KBM-7 (cell line): ENCODE measurements at regions of chr18 and their contacts with region 1.

Region 1: DNA sequence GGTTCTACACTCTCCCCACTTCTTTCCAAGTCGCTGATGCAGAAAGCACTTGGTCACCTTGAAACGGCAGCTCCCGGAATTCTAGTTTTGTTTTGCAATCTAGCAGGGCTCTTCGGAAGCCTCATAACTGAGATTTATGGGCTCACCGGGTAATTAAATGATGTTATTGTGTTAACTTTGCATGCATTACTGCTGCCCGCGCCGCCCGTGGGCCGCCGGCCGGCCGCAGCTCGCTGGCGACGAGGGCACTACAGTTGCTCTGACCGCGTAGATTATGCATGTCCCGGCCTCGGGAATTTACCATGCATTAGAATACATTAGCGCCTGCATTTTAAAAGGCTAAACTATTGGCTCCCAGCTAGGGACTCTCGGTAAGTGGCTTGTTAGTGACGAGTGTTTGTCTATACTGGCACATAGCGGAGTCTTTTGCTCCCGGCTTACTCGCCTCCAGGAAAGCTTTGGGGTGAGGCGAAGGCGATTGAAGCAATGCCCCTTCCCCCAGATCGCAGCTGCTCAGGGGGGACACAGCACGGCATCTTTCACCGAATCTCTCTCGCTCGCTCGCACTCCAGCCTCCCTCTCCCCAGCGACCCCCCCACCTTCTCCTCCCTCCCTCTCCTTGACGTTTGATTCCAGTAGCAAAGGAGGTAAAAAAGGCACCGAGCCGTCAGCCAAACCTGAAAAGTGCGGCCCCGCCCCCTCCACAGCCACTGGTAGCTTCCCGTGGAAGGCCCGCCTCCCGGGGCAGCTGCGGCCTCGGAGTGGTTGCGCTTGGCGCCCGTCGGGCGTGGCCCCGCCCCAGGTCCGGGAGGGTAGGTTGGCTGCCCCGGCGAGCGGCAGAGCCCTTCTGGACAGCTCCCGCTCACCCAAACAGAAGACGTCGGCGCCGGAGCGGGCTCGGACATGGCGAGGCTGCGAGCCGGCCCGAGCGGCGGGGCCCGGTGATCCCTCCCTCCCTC is at the start of gene ONECUT2:
- DNase-seq: peak; percentile 95

Region 2: GRCh38 chr18:56756966-56757365 is 677.8 kb before region 1 on chr18:
- in situ Hi-C with region 1: loop called (anchors 25 kb)
- DNase-seq: peak; percentile 60

Region 3: DNA sequence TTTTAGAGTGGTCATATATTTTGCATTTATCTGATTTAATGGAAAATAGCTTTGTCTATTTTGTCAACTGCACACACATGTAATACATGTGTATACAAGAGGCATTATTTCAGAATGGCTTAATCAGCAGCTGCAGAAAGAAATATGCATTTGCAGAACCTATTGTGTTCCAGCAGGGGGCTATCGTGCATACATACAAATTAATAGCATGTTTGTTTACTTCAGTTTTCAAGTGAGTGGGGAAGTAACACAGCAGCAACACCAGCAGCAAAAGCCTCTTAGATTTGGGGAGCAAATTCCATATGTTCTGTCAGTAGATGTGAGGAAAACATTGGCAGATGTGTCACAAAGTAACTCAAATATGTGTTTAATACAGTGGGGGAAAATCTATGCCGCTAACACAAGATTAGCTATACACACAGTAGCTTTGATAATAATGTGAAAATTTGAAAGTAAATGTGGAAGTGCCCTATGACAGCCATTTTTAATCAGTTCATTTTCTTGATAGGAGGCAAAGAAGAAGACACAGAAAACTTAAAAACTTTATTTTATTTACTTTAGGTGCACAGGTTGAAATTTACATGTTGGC is 565.5 kb before region 1 on chr18:
- in situ Hi-C with region 1: loop called (anchors 25 kb)
- DNase-seq: peak; percentile 51

Region 4: DNA sequence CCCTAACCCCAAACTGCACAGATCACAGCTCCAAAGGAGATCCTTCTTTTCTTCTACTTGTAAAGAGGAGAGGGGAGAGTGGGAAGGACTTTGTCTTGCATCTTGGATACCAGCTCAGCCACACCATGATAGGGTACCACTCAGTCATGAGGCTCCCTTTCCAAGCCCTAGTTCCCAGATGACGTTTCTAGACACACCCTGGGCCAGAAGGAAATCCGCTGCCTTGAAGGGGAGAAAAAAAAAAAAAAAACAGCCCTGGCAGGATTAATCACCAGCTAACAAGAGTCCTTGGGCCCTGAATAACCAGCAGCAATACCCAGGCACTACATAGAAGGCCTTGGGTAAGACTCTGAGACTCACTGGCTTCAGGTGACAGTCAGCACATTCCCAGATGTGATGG is 45.5 kb before region 1 on chr18:
- in situ Hi-C with region 1: no loop called
- DNase-seq: no peak